ENCODE measurements at regions of chr12 and their contacts with region 1.

Region 1: GRCh38 chr12:114508529-114509129 is 102.7 kb upstream of the TBX5 start:
- DNase-seq: peak; percentile 24 to 92 (median 77)

Region 2: DNA sequence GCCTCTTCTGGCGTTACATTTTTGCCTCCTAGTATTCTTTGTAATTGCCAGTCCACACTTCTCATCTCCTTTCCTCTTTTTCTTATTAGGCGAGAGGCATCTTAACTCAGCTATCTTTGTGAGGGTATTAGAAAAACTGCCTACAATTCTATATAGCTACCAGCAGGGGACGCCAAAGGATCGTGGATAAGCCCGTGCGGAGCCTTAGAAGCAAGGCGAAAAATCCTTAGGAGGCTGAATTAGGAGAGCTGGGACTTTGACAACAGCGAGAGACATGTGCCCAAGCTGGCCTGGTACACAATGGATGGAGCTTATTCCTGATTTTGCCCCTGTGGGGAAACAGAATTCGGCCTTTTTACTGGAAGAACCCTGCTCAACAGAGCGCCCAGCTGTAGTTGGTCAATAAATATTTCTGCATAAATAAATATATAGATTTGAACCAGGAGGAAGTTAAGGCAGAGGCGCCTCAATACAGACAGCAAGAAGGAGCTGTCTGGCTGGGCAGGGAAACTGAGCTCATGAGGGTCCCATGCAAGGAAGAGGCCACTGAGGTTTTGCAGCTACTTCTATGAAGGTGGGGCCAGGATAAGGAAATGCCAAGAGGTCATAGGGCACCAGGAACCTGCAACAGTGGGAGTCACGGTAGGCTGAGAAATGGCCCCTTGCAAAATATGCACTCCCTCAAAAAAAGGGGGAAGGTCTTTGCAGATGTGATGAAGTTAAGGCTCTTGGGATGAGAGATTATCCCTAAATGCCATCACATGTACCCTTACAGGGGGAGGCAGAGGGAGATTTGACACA is 527.9 kb before region 1 on chr12:
- intact Hi-C with region 1: loop called (anchors 5 kb)
- DNase-seq: peak in 40 of 42 donors; percentile 7 to 87 (median 62)

Region 3: DNA sequence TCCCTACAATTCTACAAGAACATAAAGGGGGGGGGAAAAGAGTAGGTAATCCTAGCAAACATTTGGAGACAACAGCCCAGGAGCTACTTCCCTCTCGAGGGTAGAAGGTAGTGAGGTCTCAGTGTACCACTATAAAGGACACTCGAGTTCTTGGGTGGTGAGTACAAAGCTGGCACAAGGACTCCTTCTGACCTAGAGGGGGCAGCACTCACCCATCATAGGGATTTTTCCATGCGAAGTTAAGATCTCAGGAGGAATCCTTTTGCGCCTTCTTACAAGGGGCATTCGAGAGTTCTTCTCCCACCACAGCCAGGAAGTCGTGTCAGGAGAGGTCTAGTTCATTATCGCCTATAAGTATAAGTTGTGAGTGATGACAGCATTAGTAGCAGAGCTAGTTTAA is 342.3 kb before region 1 on chr12:
- intact Hi-C with region 1: loop called (anchors 5 kb)
- DNase-seq: peak in 40 of 42 donors; percentile 5 to 89 (median 69)

Measured in head of caudate nucleus (tissue), 42 donors.